ENCODE measurements at regions of chr15 and their contacts with region 1.

Region 1: GRCh38 chr15:40160689-40161688 is at the start of gene BUB1B:
- DNase-seq: peak; percentile 92
- CTCF ChIP-seq: no peak

Region 2: DNA sequence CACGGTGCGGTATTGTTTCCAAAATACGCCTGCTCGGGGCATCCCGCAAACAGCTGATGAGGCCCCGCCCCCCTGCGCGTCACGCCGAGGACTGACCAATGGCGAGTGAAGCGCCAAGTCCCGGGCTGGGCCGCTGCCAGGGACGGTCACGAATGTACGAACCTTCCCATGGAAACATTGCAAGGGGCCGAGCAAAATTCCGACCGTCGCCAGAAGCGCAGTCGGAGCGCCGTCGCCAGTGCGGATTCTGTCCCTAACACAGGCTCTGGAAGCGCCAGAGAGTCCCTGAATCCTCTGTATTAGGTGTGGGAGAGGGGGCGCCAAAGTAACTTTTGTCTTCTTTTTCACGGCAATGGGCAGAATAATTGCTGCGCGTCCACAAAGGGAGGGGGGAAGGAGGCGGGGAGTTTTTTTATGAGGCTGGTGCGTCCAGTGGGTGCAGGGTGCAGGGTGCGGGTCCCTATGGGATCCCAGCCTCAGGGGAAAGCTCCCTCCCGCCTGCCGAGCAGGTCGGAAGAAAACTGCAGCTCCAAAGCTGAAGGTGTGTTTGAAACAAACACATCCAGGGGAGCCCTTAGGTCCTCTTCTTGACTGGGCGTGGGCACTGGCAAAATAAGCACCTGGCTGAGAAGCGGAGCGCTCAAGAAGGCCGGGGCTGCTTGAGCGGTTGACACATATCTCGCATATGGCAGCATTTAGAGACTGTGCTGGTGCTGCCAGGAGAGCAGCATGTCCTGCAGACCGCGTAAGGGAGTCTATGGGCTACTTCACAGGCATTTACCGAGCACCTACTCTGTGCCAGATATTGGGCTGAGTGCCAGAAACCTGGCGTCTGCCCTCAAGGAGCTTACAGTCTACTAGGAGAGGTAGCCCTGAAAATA is 51.9 kb before region 1 on chr15 and contains the start of gene BMF:
- in situ Hi-C with region 1: loop called (anchors 10 kb)
- DNase-seq: peak; percentile 98
- CTCF ChIP-seq: peak; percentile 21

Region 3: DNA sequence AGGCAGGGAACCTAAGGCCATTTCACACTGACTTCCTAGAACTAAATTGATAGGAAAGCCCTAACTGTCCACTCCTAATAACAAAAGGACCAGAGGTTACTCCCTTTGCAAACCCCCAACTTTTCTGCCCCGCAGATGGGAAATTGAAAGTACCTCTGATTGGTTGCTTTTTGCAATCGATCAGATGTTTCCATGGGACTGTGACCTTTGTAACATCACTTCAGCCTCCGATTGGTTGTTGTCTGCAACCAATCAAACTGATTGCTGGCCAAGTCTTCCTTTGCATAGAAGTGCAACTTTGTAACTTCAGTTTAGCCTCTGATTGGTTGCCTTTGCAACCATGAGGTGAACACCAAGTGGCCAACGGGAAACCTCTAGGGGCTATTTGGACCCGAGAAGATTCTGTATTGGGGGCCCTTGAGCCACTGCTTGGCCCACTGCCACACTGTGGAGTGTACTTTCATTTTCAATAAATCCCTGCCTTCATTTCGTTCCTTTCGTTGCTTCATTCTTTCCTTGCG is 421.8 kb after region 1 on chr15:
- in situ Hi-C with region 1: no loop called
- DNase-seq: no peak
- CTCF ChIP-seq: no peak

Measured in GM13977 (cell line).